PC-9 (cell line): ENCODE measurements at regions of chr6 and their contacts with region 1.

Region 1: GRCh38 chr6:31559958-31560696 is 12.0 kb upstream of the LTA start:
- DNase-seq: peak; percentile 60 to 83
- H3K4me3 ChIP-seq: no peak overlapping the region
- H3K27ac ChIP-seq: peak overlapping the region; percentile 33; the same call in 1 of the 2 replicates
- H3K4me1 ChIP-seq: peaks cover 15% of the 10 kb centered on the region
- H3K27me3 ChIP-seq: no peaks in the 10 kb centered on the region
- CTCF ChIP-seq: no peak

Region 2: GRCh38 chr6:30212865-30213666 is 1347.1 kb before region 1 on chr6 and contains the start of gene TRIM26:
- CTCF ChIA-PET with region 1: no interaction called
- POLR2A ChIA-PET with region 1: interaction called, 36 read pairs
- intact Hi-C with region 1: no loop called
- DNase-seq: peak; percentile 94 to 99
- H3K4me3 ChIP-seq: peak within 1 kb of the TSS; percentile 95
- H3K27ac ChIP-seq: peak within 1 kb of the TSS; percentile 83
- H3K4me1 ChIP-seq: peaks cover 27% of the 10 kb centered on the region
- H3K27me3 ChIP-seq: no peaks in the 10 kb centered on the region
- CTCF ChIP-seq: no peak
- total RNA-seq, gene TRIM26: 45.3 and 53.9 TPM in 2 replicates

Region 3: GRCh38 chr6:31580807-31581433 is 20.8 kb after region 1 on chr6:
- CTCF ChIA-PET with region 1: no interaction called
- POLR2A ChIA-PET with region 1: no interaction called
- intact Hi-C with region 1: loop called (anchors 1 kb)
- DNase-seq: peak in 1 of 2 experiments; percentile 80
- H3K4me3 ChIP-seq: peak overlapping the region; percentile 71
- H3K27ac ChIP-seq: no peak overlapping the region
- H3K4me1 ChIP-seq: 0 out of 2 replicates have a peak, but pooled peaks cover 5% of the 10 kb centered on the region
- H3K27me3 ChIP-seq: 0 out of 2 replicates have a peak, but pooled peaks cover under 1% of the 10 kb centered on the region
- CTCF ChIP-seq: peak; percentile 95

Region 4: DNA sequence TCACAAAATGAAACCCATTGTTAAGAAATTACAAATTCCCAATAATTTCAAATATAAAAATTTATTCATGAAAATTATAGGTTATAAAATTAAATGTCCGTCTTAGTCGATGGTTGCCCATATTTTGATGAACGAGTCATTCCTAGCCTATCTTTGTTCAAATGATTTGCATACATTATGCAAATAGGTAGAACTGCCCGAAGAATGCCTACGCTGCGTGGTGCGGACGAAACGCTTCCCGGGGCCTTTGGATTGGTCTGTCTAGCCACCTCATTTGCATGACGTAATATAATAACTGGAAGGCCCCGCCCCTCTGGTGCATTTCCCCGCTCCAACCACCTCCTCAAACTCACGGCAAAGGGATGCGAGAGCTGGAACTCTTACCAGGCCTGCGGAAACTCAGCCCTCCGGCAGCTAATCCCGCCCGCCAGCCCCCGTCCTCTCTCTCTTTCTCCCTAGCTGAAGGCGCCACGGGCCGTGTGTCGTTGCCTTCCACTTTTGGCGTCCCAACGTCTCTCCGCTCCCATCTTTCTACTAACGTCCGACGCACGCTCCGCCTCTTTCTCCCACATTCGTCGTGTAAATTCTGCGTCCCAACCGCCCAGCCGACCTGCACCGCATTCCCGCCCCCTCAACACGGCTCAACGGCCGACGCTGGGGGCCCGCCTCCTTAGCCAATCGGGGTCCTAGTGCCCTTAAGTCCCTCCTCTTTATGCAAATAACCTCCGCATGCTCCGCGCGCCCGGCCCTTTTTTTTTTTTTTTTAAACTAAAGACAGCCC is 59.9 kb after region 1 on chr6:
- CTCF ChIA-PET with region 1: no interaction called
- POLR2A ChIA-PET with region 1: interaction called, 16 read pairs
- intact Hi-C with region 1: no loop called
- DNase-seq: peak; percentile 96 to 97
- H3K4me3 ChIP-seq: peak overlapping the region; percentile 67
- H3K27ac ChIP-seq: peak overlapping the region; percentile 81
- H3K4me1 ChIP-seq: peaks cover 23% of the 10 kb centered on the region
- H3K27me3 ChIP-seq: no peaks in the 10 kb centered on the region
- CTCF ChIP-seq: no peak